PC-9 (cell line): ENCODE measurements at regions of chrX and their contacts with region 1.

Region 1: DNA sequence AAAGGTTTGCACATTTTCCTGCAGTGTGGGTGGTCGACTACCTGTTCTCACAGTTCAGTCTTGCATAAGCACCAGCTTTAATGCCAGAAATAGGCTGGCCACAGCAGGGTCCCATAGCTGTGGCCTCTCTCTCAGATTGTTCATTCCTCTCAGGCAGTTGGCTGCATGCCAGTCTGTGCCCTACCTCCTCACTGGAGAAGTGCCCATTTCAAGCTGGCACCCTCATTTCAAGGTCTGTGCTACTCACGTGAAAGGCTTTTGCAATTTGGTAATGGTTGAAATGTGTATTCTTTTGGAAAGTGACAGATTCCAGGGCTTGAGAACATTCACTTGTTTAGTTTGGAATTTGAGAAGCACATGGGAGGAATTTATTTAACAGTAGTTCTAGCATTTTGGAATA is 28.9 kb upstream of the MTMR1 start:
- DNase-seq: peak in 1 of 2 experiments; percentile 29
- H3K4me3 ChIP-seq: no peak overlapping the region
- H3K27ac ChIP-seq: no peak overlapping the region
- H3K4me1 ChIP-seq: no peaks in the 10 kb centered on the region
- H3K27me3 ChIP-seq: no peaks in the 10 kb centered on the region
- CTCF ChIP-seq: no peak

Region 2: DNA sequence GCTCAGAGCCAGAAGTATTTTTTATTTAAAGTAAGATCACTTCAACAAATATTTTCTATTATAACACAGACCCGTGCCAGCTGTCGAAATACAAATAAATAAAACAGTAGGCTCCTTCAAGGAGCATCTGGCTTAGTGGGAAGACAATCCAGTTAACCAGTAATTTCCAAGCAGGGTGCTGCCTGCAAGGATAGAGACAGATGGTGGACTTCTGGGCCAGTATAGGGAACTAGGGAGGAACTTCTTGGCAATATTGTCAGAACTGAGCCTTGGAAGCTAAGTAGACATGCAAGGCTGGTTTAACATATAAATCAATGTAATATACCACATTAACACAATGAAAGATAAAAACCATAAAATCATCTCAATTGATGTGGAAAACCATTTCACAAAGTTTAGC is 11.9 kb after region 1 on chrX:
- CTCF ChIA-PET with region 1: interaction called, 20 read pairs
- POLR2A ChIA-PET with region 1: no interaction called
- intact Hi-C with region 1: no loop called
- DNase-seq: no peak
- H3K4me3 ChIP-seq: no peak overlapping the region
- H3K27ac ChIP-seq: no peak overlapping the region
- H3K4me1 ChIP-seq: no peaks in the 10 kb centered on the region
- H3K27me3 ChIP-seq: no peaks in the 10 kb centered on the region
- CTCF ChIP-seq: no peak